K562 (cell line): ENCODE measurements at regions of chr1 and their contacts with region 1.

Region 1: DNA sequence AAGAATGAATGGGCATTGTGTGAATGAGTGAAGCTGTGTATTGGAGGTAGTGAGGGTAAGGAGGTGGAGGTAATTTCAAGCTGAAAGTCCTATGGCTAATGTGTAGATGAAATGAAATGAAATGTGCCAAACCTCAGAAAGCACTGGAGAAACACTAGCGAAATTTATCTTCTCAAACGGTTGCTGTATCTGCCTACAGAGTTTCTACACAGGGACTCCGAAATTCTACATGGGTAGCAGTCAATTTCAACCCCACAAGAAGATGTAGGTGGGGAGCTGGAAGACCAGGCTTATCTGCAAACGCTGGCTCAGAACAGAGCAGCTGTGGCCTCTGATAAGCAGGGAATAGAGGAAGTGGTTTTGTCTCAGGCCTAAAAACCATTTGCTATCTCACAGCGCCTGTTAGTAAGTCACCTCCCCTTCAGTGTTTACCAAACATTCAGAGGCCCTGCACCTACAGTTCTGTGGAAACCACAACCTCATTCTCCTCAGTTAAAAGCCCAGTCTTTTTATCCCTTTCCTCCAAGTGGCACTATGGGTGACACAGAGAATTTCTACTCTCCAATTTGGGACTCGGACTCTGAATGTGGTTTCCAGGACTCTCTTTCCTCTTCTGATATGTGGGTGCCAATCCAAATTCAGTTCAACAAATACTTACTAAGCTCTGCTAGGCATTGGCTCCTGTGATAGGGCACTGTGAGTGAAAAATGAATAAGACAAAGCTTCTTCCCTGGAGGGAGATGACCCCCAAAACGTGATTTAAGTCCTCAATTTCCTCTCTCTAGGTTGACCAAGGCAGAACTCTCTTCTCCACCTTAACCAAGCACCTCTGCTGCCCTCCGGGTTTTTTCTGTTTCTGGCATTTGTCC is 17.2 kb upstream of the SLAMF6 start:
- DNase-seq: peak; percentile 92 to 99 (median 94)
- ATAC-seq: peak; percentile 95
- H3K4me3 ChIP-seq: no peak overlapping the region; the same call in 1 of the 2 replicates
- H3K27ac ChIP-seq: peak overlapping the region; percentile 93
- H3K4me1 ChIP-seq: peaks cover 22 to 47% of the 10 kb centered on the region in 2 experiments
- H3K27me3 ChIP-seq: no peaks in the 10 kb centered on the region
- CTCF ChIP-seq: peak in 1 of 3 experiments; percentile 32; a peak in 2 of 6 replicates
- EP300 ChIP-seq: peak; percentile 100
- POLR2A ChIP-seq: peak; percentile 72
- RAD21 ChIP-seq: peak; percentile 45 to 61

Region 2: GRCh38 chr1:160428655-160429054 is 111.6 kb before region 1 on chr1:
- CTCF ChIA-PET with region 1: no interaction called
- POLR2A ChIA-PET with region 1: interaction called, 4 read pairs
- in situ Hi-C with region 1: no loop called
- intact Hi-C with region 1: loop called (anchors 2 kb)
- DNase-seq: peak; percentile 70 to 77 (median 74)
- ATAC-seq: peak; percentile 89
- H3K4me3 ChIP-seq: no peak overlapping the region
- H3K27ac ChIP-seq: no peak overlapping the region; the same call in 2 of the 3 replicates
- H3K4me1 ChIP-seq: peaks cover 4 to 16% of the 10 kb centered on the region in 2 experiments; a peak in 4 of 5 replicates
- H3K27me3 ChIP-seq: no peaks in the 10 kb centered on the region
- CTCF ChIP-seq: peak; percentile 70 to 95 (median 87)
- EP300 ChIP-seq: peak; percentile 38; the same call in 1 of the 2 replicates
- POLR2A ChIP-seq: no peak
- RAD21 ChIP-seq: peak; percentile 99

Region 3: DNA sequence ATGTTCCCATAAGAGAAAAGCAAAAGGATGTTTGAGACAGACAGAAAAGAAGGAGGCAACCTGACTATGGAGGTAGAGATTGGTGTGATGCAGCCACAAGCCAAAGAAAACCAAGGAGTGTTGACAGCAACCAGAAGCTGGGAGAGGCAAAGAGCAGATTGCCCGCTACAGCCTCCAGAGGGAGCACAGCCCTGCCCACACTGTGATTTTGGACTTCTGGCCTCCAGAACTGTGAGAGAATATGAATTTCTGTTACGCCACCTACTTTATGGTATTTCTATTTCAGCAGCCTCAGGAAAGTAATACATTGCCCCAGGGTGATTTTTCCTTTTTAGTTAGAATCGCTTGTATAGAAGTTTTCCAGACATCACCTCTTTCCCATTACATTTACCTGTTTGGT is 45.6 kb before region 1 on chr1:
- CTCF ChIA-PET with region 1: no interaction called
- POLR2A ChIA-PET with region 1: no interaction called
- in situ Hi-C with region 1: no loop called
- intact Hi-C with region 1: loop called (anchors 5 kb)
- DNase-seq: peak in 1 of 4 experiments; percentile 42
- ATAC-seq: peak; percentile 82
- H3K4me3 ChIP-seq: no peak overlapping the region
- H3K27ac ChIP-seq: no peak overlapping the region
- H3K4me1 ChIP-seq: 0 out of 5 replicates have a peak, but pooled peaks cover 0 to 4% of the 10 kb centered on the region in 2 experiments
- H3K27me3 ChIP-seq: no peaks in the 10 kb centered on the region
- CTCF ChIP-seq: peak; percentile 37 to 40 (median 39); a peak in 5 of 6 replicates
- EP300 ChIP-seq: no peak
- POLR2A ChIP-seq: no peak
- RAD21 ChIP-seq: peak in 1 of 2 experiments; percentile 59; a peak in 2 of 4 replicates

Region 4: GRCh38 chr1:160550572-160551034 is 10.4 kb after region 1 on chr1:
- CTCF ChIA-PET with region 1: no interaction called
- POLR2A ChIA-PET with region 1: interaction called, 18 read pairs
- in situ Hi-C with region 1: no loop called
- intact Hi-C with region 1: no loop called
- DNase-seq: peak in 3 of 4 experiments; percentile 35 to 69 (median 37)
- ATAC-seq: peak; percentile 77
- H3K4me3 ChIP-seq: no peak overlapping the region
- H3K27ac ChIP-seq: no peak overlapping the region; the same call in 2 of the 3 replicates
- H3K4me1 ChIP-seq: peaks cover 33 to 57% of the 10 kb centered on the region in 2 experiments
- H3K27me3 ChIP-seq: no peaks in the 10 kb centered on the region
- CTCF ChIP-seq: peak; percentile 44 to 47 (median 44); a peak in 4 of 6 replicates
- EP300 ChIP-seq: no peak
- POLR2A ChIP-seq: no peak
- RAD21 ChIP-seq: peak in 1 of 2 experiments; percentile 63; a peak in 2 of 4 replicates

Region 5: DNA sequence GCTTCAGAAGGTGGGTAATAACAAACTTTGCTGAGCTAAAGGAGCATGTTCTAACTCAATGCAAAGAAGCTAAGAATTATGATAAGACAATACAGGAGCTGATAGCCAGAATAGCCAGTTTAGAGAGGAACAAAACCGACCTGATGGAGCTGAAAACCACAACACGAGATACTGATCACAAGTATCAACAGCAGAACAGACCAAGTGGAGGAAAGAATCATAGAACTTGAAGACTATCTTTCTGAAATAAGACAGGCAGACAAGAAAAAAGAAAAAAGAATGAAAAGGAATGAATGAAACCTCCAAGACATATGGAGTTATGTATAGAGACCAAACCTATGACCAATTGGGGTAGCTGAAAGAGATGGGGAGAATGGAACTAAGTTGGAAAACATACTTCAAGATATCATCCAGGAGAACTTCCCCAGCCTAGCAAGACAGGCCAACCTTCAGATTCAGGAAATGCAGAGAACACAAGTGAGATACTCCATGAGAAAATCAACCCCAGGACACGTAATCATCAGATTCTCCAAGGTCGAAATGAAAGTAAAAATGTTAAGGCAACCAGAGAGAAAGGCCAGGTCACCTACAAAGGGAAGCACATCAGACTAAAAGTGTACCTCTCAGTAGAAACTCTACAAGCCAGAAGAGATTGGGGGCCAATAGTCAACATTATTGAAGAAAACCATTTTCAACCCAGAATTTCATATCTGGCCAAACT is 18.6 kb after region 1 on chr1:
- CTCF ChIA-PET with region 1: no interaction called
- POLR2A ChIA-PET with region 1: interaction called, 12 read pairs
- in situ Hi-C with region 1: no loop called
- intact Hi-C with region 1: no loop called
- DNase-seq: no peak
- ATAC-seq: no peak; the same call in 2 of the 3 replicates
- H3K4me3 ChIP-seq: no peak overlapping the region
- H3K27ac ChIP-seq: peak overlapping the region; percentile 9; the same call in 1 of the 3 replicates
- H3K4me1 ChIP-seq: peaks cover 8 to 15% of the 10 kb centered on the region in 2 experiments
- H3K27me3 ChIP-seq: no peaks in the 10 kb centered on the region
- CTCF ChIP-seq: no peak
- EP300 ChIP-seq: no peak
- POLR2A ChIP-seq: no peak
- RAD21 ChIP-seq: peak in 1 of 2 experiments; percentile 4; a peak in 1 of 4 replicates

Region 6: GRCh38 chr1:160607011-160607671 is 66.9 kb after region 1 on chr1:
- CTCF ChIA-PET with region 1: no interaction called
- POLR2A ChIA-PET with region 1: no interaction called
- in situ Hi-C with region 1: no loop called
- intact Hi-C with region 1: loop called (anchors 1 kb)
- DNase-seq: peak; percentile 71 to 86 (median 74)
- ATAC-seq: peak; percentile 97
- H3K4me3 ChIP-seq: no peak overlapping the region
- H3K27ac ChIP-seq: no peak overlapping the region
- H3K4me1 ChIP-seq: peaks cover 0 to 22% of the 10 kb centered on the region in 2 experiments; a peak in 2 of 5 replicates
- H3K27me3 ChIP-seq: no peaks in the 10 kb centered on the region
- CTCF ChIP-seq: peak; percentile 80 to 95 (median 84)
- EP300 ChIP-seq: 0 out of 2 replicates have a peak, but pooled peaks have one; percentile 40
- POLR2A ChIP-seq: no peak
- RAD21 ChIP-seq: peak; percentile 99 to 100

Region 7: DNA sequence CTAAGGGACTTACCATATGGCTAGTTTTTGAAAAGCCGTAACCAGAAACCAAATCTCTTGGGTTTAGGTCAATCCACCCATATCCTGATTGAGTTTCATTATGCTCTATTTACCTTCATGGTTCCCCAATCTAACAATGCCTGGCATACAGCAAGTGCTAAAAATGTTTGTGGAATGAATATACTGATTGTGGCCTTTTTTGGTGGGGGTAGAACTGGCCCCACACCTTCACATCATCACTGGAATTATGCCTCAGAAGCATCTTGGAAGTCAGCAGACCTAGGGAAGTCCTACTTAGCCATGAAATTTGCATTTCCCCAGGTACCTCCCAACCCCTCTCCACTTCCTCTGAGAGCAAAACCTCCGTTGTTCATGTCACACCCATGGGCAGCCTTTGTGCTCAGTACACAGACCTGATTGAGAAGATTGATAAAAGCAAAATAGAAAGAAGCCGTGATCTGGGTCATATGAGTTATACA is 124.4 kb after region 1 on chr1:
- CTCF ChIA-PET with region 1: no interaction called
- POLR2A ChIA-PET with region 1: no interaction called
- in situ Hi-C with region 1: no loop called
- intact Hi-C with region 1: loop called (anchors 5 kb)
- DNase-seq: no peak
- ATAC-seq: peak; percentile 31
- H3K4me3 ChIP-seq: no peak overlapping the region
- H3K27ac ChIP-seq: peak overlapping the region; percentile 84; the same call in 2 of the 3 replicates
- H3K4me1 ChIP-seq: peaks cover 3 to 26% of the 10 kb centered on the region in 2 experiments; a peak in 4 of 5 replicates
- H3K27me3 ChIP-seq: no peaks in the 10 kb centered on the region
- CTCF ChIP-seq: no peak
- EP300 ChIP-seq: no peak
- POLR2A ChIP-seq: no peak
- RAD21 ChIP-seq: no peak

Region 8: GRCh38 chr1:160748181-160748877 is 208.1 kb after region 1 on chr1:
- CTCF ChIA-PET with region 1: no interaction called
- POLR2A ChIA-PET with region 1: no interaction called
- in situ Hi-C with region 1: no loop called
- intact Hi-C with region 1: no loop called
- DNase-seq: peak; percentile 27 to 33 (median 30)
- ATAC-seq: peak; percentile 73
- H3K4me3 ChIP-seq: no peak overlapping the region
- H3K27ac ChIP-seq: no peak overlapping the region
- H3K4me1 ChIP-seq: no peaks in the 10 kb centered on the region; a peak in 1 of 5 replicates
- H3K27me3 ChIP-seq: peaks cover 7 to 16% of the 10 kb centered on the region in 2 experiments; a peak in 4 of 5 replicates
- CTCF ChIP-seq: peak; percentile 43 to 60 (median 51)
- EP300 ChIP-seq: no peak
- POLR2A ChIP-seq: no peak
- RAD21 ChIP-seq: peak in 1 of 2 experiments; percentile 39; a peak in 3 of 4 replicates